ENCODE measurements at regions of chr15 and their contacts with region 1.

Region 1: DNA sequence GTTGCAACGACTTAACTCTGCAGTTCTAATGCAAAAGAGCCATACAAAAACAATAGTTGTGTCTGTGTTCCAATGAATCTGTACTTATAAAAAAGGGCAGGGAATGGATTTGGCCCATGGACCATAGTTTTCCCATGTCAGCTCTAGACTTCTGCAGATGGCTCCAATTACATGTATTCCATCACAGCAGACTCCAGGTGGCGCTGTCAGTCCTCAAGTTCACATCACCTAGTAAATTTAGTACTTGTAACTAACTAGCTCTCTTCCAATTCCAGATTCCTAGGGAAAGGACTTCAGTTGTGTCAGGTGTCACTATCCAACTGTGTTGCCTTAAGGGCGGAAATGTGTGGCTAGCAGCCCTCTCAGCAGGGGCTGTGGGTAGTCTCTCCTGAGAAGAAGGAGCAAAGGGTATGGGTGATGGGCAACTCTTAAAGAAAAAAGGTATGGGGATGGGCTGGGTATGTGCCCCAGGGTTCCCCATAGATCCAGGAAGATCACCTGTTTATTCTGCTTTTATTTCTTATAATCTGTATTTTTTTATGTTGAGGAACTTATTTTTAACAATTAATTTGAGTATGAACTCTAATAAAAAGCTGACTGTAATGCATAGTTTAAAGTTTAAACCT is 36.2 kb downstream of the BBS4 start:
- DNase-seq: peak; percentile 79
- ATAC-seq: peak; percentile 63
- H3K4me3 Mint-ChIP-seq: no peak overlapping the region
- H3K27ac Mint-ChIP-seq: no peak overlapping the region
- H3K4me1 Mint-ChIP-seq: no peaks in the 10 kb centered on the region
- H3K27me3 Mint-ChIP-seq: no peaks in the 10 kb centered on the region

Region 2: DNA sequence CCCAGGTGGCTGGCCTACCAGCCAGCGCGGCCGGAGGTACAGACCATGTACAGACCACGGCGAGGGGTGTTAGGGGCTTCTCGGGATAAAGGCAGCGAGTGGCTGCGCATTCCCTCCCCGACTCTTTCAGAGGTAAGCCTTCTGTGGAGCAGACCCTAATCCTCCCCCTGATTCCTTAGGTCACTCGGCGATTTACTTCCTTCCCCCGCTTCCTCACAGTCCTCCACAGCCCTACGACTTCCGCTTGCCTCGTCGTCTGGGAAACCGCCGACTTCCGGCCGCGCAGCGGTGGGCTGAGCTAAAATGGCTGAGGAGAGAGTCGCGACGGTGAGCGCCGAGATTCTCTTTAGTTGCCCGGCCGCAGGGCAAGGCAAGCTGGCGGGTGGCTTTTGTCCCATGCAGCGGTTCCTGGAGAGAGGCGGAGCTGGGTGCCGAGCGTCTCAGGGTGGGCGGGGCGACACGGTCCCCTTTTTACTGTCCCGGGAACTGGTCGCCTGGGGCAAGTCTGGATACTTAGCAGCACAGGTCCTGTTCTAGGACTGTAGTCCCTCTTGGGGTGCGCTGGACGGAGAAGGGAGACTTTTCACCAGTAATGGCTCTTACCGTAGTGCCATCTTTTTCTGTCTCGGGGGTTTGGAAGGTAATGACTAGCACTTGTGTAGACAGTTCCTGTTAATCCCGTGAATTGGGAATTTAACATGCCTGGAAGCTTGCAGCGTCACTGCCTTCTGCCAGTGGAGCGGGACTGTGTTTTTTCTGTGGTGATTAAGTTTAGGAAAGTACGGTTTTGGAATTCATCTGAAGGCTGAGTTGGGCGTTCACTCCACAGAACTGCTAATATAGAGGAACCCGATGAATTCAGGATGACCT is 36.0 kb before region 1 on chr15 and contains the starts of genes BBS4 and HIGD2B:
- CTCF ChIA-PET with region 1: interaction called, 14 read pairs
- DNase-seq: peak; percentile 95
- ATAC-seq: peak; percentile 97
- H3K4me3 Mint-ChIP-seq: peak within 1 kb of the TSS; percentile 91
- H3K27ac Mint-ChIP-seq: peak within 1 kb of the TSS; percentile 95
- H3K4me1 Mint-ChIP-seq: peaks cover 16% of the 10 kb centered on the region
- H3K27me3 Mint-ChIP-seq: peaks cover under 1% of the 10 kb centered on the region
- total RNA-seq, gene BBS4: 13.1 to 14.7 TPM
- total RNA-seq, gene HIGD2B: 0.53 TPM in 1 of 2 experiments, not detected in the other

Region 3: DNA sequence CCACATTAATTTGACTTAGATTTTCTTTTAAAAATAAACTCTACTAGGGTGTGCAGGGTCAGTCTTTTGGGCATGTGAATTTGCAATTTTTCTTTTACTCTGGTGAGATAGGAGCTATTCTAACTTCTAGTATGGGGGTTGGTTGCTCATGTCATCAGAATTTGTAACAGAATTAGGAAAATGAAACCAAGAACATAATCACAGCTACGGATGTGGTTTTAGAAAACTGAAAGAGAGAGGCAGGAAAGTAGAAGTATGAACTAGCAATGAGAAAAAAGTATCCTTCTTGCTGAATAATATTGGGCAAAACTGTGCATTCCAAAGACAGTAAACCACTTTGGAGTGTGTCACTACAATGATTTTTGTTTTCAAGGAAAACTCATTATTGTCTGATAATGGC is 18.0 kb after region 1 on chr15:
- CTCF ChIA-PET with region 1: interaction called, 24 read pairs
- DNase-seq: no peak
- ATAC-seq: peak; percentile 79
- H3K4me3 Mint-ChIP-seq: peak overlapping the region; percentile 55
- H3K27ac Mint-ChIP-seq: peak overlapping the region; percentile 91
- H3K4me1 Mint-ChIP-seq: peaks cover 31% of the 10 kb centered on the region
- H3K27me3 Mint-ChIP-seq: no peaks in the 10 kb centered on the region

Region 4: GRCh38 chr15:72764656-72765055 is 42.5 kb after region 1 on chr15:
- CTCF ChIA-PET with region 1: interaction called, 13 read pairs
- DNase-seq: no peak
- ATAC-seq: no peak
- H3K4me3 Mint-ChIP-seq: no peak overlapping the region
- H3K27ac Mint-ChIP-seq: peak overlapping the region; percentile 66
- H3K4me1 Mint-ChIP-seq: peaks cover 29% of the 10 kb centered on the region
- H3K27me3 Mint-ChIP-seq: no peaks in the 10 kb centered on the region

Region 5: DNA sequence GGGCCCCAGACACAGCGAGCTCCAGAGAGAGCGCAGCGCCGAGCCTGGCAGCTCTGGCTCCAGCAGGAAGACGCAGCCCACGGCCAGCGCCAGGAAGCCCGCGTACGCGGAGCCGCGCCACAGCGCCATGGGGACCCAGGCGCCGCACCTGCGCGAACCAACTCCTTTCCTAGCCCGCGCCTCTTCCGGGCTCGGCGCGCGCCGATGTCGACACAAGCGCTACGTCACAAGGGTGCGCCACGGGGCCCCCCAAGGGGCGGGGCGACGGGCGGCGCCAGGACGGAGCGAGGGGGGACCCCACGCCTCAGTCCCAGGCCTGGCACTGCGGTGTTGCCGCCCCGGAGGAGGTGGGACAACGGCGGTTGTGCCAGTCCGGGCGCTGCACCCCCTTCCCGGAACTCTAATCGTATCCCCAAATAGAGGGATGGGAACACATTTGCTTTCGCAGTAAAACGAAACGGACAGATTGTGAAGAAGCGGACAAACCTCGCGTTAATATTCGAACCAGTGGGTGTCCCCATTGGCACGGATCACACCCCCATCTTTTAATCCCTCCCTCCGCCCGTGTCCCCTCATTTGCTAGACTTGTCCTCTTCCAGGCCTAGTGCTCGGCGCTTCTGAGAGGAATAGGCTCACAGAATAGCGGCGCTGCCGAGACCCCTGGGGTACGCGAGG is 61.5 kb after region 1 on chr15 and contains the start of gene ADPGK:
- CTCF ChIA-PET with region 1: interaction called, 34 read pairs
- DNase-seq: peak; percentile 93
- ATAC-seq: peak; percentile 82
- H3K4me3 Mint-ChIP-seq: peak within 1 kb of the TSS; percentile 93
- H3K27ac Mint-ChIP-seq: peak within 1 kb of the TSS; percentile 94
- H3K4me1 Mint-ChIP-seq: peaks cover 78% of the 10 kb centered on the region
- H3K27me3 Mint-ChIP-seq: no peaks in the 10 kb centered on the region
- total RNA-seq, gene ADPGK: 67.8 to 76.5 TPM

Region 6: GRCh38 chr15:72958634-72959033 is 236.4 kb after region 1 on chr15:
- CTCF ChIA-PET with region 1: no interaction called
- DNase-seq: no peak
- ATAC-seq: no peak
- H3K4me3 Mint-ChIP-seq: no peak overlapping the region
- H3K27ac Mint-ChIP-seq: no peak overlapping the region
- H3K4me1 Mint-ChIP-seq: peaks cover 4% of the 10 kb centered on the region
- H3K27me3 Mint-ChIP-seq: peaks cover 11% of the 10 kb centered on the region

Measured in activated CD8-positive, alpha-beta memory T cell treated with anti-CD3 and anti-CD28 coated beads, Interleukin-2, amount 10 ng/mL, durations not matched to agents 7 days and 5 days (primary cell).